ENCODE measurements at regions of chr1 and their contacts with region 1.

Region 1: GRCh38 chr1:241834733-241835377 is 13.1 kb upstream of the EXO1 start:
- DNase-seq: no peak
- H3K4me3 ChIP-seq: no peak overlapping the region
- CTCF ChIP-seq: no peak
- POLR2A ChIP-seq: no peak

Region 2: DNA sequence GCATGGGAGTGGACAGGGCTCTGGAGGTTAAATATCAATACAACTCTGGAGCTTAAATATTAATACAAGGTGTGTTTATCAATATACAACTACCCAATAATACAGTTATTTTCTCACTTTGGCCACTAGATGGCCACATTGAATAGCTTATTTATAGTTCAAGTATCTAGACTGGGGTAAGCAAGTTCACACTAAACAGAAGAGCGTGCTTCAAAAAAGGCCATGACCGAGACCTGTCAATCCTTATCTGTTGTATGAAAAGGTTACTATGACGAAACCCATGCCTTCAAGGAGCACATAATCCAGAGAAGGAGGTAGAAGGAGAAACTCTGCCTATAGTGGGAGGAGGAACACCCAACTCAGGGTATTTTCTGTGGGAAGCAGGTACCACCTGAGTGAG is 223.8 kb before region 1 on chr1:
- intact Hi-C with region 1: loop called (anchors 5 kb)
- DNase-seq: no peak
- H3K4me3 ChIP-seq: no peak overlapping the region
- CTCF ChIP-seq: no peak
- POLR2A ChIP-seq: no peak